Ovary (tissue), 10 donors: ENCODE measurements at regions of chr15 and their contacts with region 1.

Region 1: DNA sequence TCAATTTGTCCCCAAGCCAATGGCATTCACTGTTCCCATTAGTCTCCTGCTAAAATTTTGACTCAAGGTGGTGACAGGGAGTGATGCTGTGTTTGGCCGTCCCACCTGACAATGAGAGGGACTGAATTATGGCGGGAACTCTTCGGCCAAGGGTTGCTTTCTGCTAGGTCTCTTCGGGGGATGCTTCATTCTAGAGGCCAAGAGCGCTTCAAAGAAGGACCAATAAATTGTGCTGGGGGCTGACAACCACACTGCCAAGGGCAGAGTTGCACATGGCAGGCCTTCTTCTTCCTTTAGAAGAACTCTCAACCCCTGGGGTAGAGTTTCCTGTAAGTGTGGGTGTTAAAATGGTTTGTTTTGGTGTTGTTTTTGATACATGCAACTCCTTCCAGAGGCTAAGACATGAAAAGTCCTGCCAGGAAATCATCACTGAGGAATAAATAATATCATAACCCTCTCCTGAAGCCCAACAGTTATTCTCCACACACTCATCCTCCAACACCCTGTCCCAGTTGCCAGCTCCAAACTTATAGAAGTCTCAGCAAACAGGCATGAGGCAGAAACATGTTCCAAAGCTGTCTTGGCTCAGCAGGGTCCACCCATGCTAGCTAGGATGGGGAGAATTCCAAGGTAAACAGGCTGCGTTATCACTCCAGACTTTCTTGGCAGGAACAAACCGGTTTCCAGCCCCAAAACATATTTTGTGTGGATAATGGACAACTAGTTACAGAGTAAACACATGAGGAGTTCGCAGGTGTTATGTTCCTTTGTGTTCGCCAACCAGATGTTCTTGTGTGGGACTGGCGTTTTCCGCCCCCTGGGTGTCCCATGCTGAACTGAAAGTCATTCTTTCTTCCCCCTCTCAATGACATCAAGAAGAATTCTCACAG is 396.7 kb upstream of the RGMA start:
- DNase-seq: peak; percentile 48 to 69 (median 61)
- H3K4me3 ChIP-seq: no peak overlapping the region
- H3K27ac ChIP-seq: peak overlapping the region; percentile 46 to 70
- H3K4me1 ChIP-seq: peaks cover 12% of the 10 kb centered on the region
- H3K27me3 ChIP-seq: no peaks in the 10 kb centered on the region
- CTCF ChIP-seq: peak in 2 of 3 donors; percentile 31 to 60
- EP300 ChIP-seq: no peak
- POLR2A ChIP-seq: no peak

Region 2: DNA sequence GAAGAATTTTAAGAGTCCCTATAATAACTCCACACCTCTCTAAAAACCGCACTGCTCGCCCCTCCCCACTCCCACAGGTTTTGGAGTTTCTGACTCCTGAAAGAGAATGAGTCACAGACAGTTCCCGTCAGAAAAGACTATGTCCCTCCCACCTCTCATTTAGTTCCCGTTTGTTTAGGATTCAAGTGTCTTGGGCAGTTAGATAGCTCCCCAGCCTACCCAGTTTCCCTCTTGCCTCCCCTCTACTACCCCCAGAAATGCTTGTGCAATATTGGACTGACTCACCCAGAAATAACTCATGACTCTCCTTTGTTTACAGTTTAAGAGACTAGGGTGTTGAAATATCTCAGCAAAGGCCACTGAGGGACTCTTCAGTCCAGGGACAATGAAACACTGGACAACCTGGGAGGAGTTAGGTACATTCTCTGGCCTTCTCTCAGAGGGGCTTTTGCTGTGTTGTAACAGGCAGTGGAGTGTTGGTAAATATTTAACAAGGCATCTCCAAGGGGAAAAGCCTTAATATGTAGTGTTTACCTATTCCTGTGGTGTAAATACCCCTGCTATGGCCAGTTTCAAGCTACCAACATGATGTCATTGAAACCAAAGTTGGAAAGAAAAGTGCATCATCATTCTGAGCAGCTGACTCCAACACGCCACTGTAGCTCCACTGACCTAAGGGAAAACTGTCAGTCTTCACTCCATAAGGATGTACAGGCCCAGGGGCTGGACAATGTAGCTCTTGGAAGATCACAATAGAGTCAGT is 681.7 kb before region 1 on chr15:
- intact Hi-C with region 1: loop called in 1 of 4 experiments (anchors 5 kb)
- DNase-seq: peak; percentile 45 to 80 (median 63)
- H3K4me3 ChIP-seq: no peak overlapping the region
- H3K27ac ChIP-seq: peak overlapping the region in 1 of 2 donors; percentile 51
- H3K4me1 ChIP-seq: peaks cover 9% of the 10 kb centered on the region
- H3K27me3 ChIP-seq: no peaks in the 10 kb centered on the region
- CTCF ChIP-seq: no peak
- EP300 ChIP-seq: peak; percentile 67
- POLR2A ChIP-seq: no peak

Region 3: DNA sequence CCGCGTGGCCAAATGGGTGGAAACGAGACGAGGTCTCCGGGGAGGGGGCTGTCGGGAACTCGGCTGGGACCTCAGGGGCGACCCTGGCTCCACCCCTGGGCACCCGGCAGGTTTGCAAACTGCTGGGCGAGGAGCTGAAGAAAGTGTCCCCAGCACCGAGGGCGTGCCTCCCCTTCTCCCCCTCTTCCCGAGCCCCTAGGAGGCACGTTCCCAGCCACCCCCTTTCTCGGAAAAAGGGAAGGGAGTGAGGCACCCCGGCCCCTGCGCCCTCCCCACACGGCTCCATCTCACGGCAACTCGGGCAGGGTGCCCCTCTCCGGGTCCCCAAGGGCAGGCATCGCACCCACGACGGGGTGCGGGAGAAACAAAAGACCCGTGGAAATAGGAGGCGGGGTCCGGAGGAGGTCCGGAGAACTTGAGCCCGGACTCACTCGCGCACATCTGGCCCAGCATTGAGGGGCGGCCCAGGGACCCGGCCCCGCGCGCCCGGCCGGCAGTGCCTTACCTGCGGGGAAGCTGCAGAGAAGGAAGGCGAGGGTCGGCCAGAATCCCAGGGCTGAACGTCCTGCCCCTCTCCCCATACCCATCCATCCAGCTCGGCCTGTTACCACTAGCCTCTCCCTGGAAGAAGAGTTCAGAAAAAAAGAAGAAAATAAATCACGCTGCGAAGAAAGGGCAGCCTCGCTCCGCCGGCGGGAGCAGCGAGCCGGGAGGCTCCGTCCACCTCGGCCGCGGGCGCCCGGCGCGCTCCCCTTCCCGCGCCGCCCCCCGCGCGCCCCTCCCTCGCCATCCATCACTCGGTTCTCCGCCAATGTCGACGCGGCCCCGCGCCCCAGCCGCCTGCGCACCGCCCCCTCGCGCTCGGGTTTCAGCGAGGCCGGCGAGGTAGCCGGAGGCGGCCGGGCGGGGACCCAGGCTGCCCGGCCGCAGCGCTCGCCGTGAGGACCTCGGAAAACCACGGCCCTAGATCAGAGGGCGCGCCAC is 413.0 kb before region 1 on chr15:
- intact Hi-C with region 1: loop called in 1 of 4 experiments (anchors 10 kb)
- DNase-seq: peak; percentile 89 to 94 (median 92)
- H3K4me3 ChIP-seq: peak overlapping the region; percentile 77
- H3K27ac ChIP-seq: peak overlapping the region; percentile 37 to 87
- H3K4me1 ChIP-seq: peaks cover 12% of the 10 kb centered on the region
- H3K27me3 ChIP-seq: no peaks in the 10 kb centered on the region
- CTCF ChIP-seq: no peak
- EP300 ChIP-seq: no peak
- POLR2A ChIP-seq: peak; percentile 54